Heart left ventricle (tissue), 16 donors: ENCODE measurements at regions of chr13 and their contacts with region 1.

Region 1: DNA sequence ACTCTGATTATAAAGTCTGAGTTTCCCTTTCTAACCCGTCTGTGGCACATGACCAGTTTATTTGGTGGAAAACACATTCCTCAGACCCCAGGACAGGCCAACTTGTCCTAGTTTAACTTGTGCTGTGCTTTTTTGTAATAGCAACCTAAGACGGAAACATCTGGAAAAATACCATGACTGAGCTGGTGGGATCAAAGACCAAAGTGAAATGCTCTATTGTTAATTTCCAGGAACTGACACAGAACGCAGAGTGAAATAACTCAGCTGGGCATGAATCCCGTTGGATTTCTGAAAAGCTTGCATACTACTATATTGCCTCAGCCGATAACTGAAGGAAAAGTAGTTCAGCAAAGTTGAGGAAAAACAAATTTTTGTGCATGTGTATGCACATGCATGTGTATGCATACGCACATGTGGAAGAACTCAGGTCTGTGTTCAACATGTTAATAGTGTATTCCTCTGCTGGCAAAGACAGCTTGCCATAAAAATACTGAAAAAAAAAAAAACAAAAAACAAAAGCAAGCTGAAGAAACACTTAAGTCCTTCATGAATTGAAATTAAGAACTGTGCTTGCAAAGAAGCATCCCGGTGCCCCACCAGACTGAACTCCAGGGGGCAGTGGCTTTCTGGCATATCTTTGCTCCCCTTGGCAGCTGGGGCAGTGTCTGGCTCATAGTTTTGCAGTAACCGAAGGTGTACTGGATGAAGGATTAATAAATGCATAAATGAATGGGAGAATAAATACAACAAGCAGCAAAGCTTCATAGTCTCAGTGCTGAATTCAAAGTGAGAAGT is 187.8 kb downstream of the LHFPL6 start:
- DNase-seq: peak; percentile 65 to 75 (median 68)
- ATAC-seq: peak; percentile 65 to 87 (median 78)
- H3K4me3 ChIP-seq: peak overlapping the region in 7 of 12 donors; percentile 3 to 16 (median 10)
- H3K27ac ChIP-seq: peak overlapping the region; percentile 52 to 83 (median 70)
- H3K4me1 ChIP-seq: peaks cover 0 to 88% (median 71%) of the 10 kb centered on the region in 12 donors
- H3K27me3 ChIP-seq: no peaks in the 10 kb centered on the region
- CTCF ChIP-seq: peak; percentile 35 to 75 (median 64)
- POLR2A ChIP-seq: no peak

Region 2: GRCh38 chr13:39037880-39038568 is 377.2 kb before region 1 on chr13 and contains the starts of genes NHLRC3 and PROSER1:
- intact Hi-C with region 1: loop called in 1 of 10 experiments (anchors 10 kb)
- DNase-seq: peak; percentile 91 to 97 (median 93)
- ATAC-seq: peak; percentile 94 to 99 (median 98)
- H3K4me3 ChIP-seq: peak within 1 kb of the TSS; percentile 66 to 94 (median 81)
- H3K27ac ChIP-seq: peak within 1 kb of the TSS; percentile 66 to 94 (median 84)
- H3K4me1 ChIP-seq: peaks cover 7 to 69% (median 39%) of the 10 kb centered on the region in 12 donors
- H3K27me3 ChIP-seq: no peaks in the 10 kb centered on the region
- CTCF ChIP-seq: peak in 3 of 12 donors; percentile 6 to 15 (median 10)
- POLR2A ChIP-seq: peak in 1 of 2 donors; percentile 44
- total RNA-seq, gene NHLRC3: 3.9 to 19.9 (median 10.6) TPM
- total RNA-seq, gene PROSER1: 10.4 to 22.2 (median 16.2) TPM

Region 3: GRCh38 chr13:39273953-39274738 is 141.1 kb before region 1 on chr13:
- intact Hi-C with region 1: loop called in 4 of 10 experiments (anchors 5 to 10 kb)
- DNase-seq: no peak
- ATAC-seq: peak in 2 of 4 donors; percentile 24 to 50
- H3K4me3 ChIP-seq: no peak overlapping the region
- H3K27ac ChIP-seq: no peak overlapping the region
- H3K4me1 ChIP-seq: peaks cover 0 to 22% (median 12%) of the 10 kb centered on the region in 12 donors
- H3K27me3 ChIP-seq: no peaks in the 10 kb centered on the region
- CTCF ChIP-seq: peak in 10 of 12 donors; percentile 5 to 44 (median 19)
- POLR2A ChIP-seq: no peak

Region 4: GRCh38 chr13:39484506-39485313 is 69.5 kb after region 1 on chr13:
- intact Hi-C with region 1: loop called in 1 of 10 experiments (anchors 10 kb)
- DNase-seq: no peak
- ATAC-seq: no peak
- H3K4me3 ChIP-seq: no peak overlapping the region
- H3K27ac ChIP-seq: peak overlapping the region in 1 of 12 donors; percentile 4
- H3K4me1 ChIP-seq: peaks cover 3 to 70% (median 36%) of the 10 kb centered on the region in 12 donors
- H3K27me3 ChIP-seq: no peaks in the 10 kb centered on the region
- CTCF ChIP-seq: no peak
- POLR2A ChIP-seq: no peak

Region 5: DNA sequence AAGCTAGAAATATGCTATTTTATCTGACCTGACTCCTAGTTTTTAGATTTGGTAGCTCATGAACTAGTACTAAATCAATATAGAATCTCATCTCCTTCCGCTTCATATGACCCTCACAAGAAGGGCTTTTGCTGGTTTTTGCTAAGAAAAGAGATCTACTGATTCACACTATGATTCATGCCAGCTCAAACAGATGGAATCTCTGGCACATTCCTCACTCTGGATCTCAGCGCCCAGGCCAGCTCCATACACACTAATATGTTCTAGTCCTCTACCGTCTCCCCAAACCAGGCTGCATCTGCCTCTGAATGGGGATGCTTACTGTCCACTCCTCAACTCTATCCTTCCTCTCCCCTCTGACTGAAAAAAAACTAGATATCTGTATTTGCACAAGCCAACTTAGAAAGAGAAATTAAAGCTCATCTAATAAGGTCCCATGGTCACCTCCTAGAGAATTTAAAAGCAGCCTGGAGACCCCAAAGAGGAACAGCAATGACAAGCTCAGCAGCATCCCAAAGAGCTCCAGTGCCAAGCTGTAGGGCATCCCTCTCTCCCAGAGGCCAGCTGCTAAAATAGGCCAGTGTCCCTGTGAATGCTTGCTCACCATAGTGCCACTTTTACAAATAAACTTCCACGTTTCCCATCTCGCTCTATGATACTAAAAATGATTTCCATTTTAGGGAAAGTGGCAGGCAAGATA is 112.9 kb after region 1 on chr13:
- intact Hi-C with region 1: loop called in 1 of 10 experiments (anchors 10 kb)
- DNase-seq: peak in 1 of 5 donors; percentile 50
- ATAC-seq: peak in 3 of 4 donors; percentile 53 to 73 (median 67)
- H3K4me3 ChIP-seq: no peak overlapping the region
- H3K27ac ChIP-seq: peak overlapping the region in 9 of 12 donors; percentile 2 to 36 (median 9)
- H3K4me1 ChIP-seq: peaks cover 3 to 88% (median 65%) of the 10 kb centered on the region in 12 donors
- H3K27me3 ChIP-seq: no peaks in the 10 kb centered on the region
- CTCF ChIP-seq: no peak
- POLR2A ChIP-seq: no peak

Region 6: DNA sequence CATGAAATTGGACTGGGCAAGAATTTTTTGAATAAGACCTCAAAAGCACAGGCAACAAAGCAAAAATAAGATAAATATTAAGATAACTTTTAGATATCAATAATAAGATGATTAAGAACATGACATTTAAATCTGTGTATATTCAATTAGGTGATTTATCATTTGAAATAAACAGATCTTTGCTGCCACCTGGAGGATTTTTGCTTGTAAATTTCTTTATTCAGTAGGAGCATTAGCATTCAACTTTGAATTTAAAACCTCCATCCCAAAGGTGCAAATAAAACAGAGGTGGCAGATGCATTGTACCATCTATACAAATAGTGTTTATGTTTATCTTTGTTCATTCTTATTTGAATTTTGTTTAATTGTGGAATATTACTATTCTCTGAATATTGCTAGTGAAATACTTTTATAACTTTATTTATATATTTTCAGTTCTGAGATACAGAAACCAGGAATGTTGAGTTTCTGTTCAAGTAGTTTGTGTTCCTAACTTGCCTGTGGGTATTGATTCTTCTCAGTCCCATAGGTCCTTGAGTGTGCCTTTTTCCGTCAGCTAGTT is 261.2 kb after region 1 on chr13:
- intact Hi-C with region 1: no loop called
- DNase-seq: no peak
- ATAC-seq: peak in 1 of 4 donors; percentile 41
- H3K4me3 ChIP-seq: peak overlapping the region in 1 of 12 donors; percentile 13
- H3K27ac ChIP-seq: no peak overlapping the region
- H3K4me1 ChIP-seq: peaks cover 0 to 9% (median 0%) of the 10 kb centered on the region in 12 donors
- H3K27me3 ChIP-seq: no peaks in the 10 kb centered on the region
- CTCF ChIP-seq: peak; percentile 34 to 70 (median 58)
- POLR2A ChIP-seq: no peak

Region 7: DNA sequence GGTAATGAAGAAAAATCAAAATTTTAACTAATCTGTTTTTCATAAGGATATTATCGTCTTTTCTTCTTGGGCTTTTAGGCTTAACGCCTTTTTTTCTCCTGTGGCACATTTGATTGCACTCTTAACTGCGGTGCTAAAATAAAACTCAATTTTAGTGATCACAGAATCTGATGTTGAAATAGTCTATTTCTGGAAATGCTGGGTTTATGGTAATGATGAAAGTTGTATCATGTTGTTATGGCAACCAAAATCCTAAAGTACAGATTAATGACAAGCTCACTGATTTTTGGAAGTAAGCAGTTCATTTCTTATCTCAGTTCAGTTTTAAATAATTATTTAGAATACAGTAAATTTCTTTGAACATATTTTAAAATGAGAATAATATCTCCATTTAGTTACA is 325.6 kb after region 1 on chr13:
- intact Hi-C with region 1: no loop called
- DNase-seq: no peak
- ATAC-seq: no peak
- H3K4me3 ChIP-seq: no peak overlapping the region
- H3K27ac ChIP-seq: no peak overlapping the region
- H3K4me1 ChIP-seq: no peaks in the 10 kb centered on the region
- H3K27me3 ChIP-seq: no peaks in the 10 kb centered on the region
- CTCF ChIP-seq: no peak
- POLR2A ChIP-seq: no peak